K562 (cell line): ENCODE measurements at regions of chr10 and their contacts with region 1.

Region 1: GRCh38 chr10:132048294-132048667 is 17.5 kb upstream of the JAKMIP3 start:
- DNase-seq: no peak
- ATAC-seq: no peak
- H3K4me3 ChIP-seq: no peak overlapping the region
- H3K27ac ChIP-seq: no peak overlapping the region
- H3K4me1 ChIP-seq: no peaks in the 10 kb centered on the region
- H3K27me3 ChIP-seq: peaks cover 4 to 38% of the 10 kb centered on the region in 2 experiments; a peak in 4 of 5 replicates
- CTCF ChIP-seq: no peak
- EP300 ChIP-seq: no peak
- POLR2A ChIP-seq: no peak
- RAD21 ChIP-seq: no peak

Region 2: DNA sequence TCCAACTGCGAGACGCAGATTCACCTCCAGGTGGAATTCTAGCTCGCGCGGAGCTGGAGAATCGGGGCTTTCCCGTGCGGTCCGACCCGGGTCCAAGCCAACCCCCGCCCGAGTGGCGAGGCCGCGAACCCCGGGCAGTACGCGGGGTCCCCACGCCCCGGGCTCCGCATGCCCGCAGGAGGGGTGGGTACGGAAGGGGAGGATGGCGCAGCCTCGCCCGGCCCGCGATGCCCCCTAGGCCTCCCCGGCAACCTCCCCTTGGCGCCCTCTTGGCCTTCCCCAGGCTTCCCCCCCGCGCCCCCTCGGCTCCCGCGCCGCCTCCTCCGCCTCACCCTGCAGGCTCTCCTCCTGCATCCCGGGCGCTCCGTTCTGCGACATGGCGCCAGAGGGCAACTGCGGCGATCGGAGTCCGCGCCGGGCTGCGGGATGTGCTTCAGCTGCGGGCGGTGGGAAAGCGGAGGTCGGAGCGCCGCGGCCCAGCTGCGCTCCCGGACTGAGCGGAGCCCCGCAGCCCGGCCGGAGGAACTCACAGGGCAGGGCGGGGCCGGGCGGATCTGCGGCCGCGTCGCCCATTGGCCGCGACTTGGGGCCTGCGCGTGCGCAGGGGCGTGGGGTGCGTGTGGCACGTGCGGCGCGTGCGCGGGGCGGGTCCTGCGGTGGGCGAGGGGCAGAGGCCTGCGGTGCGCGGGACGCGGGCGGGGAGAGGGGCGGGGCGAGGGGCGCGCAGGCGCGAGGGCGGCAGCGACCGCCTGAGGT is 66.7 kb before region 1 on chr10 and contains the start of gene BNIP3:
- CTCF ChIA-PET with region 1: no interaction called
- POLR2A ChIA-PET with region 1: no interaction called
- in situ Hi-C with region 1: no loop called
- intact Hi-C with region 1: no loop called
- DNase-seq: peak; percentile 94 to 97 (median 97)
- ATAC-seq: peak; percentile 95
- H3K4me3 ChIP-seq: peak within 1 kb of the TSS; percentile 68
- H3K27ac ChIP-seq: peak within 1 kb of the TSS; percentile 79
- H3K4me1 ChIP-seq: peaks cover 30 to 35% of the 10 kb centered on the region in 2 experiments; a peak in 4 of 5 replicates
- H3K27me3 ChIP-seq: no peaks in the 10 kb centered on the region
- CTCF ChIP-seq: 0 out of 6 replicates have a peak, but pooled peaks of 1 of the 3 experiments have one; percentile 4
- EP300 ChIP-seq: no peak
- POLR2A ChIP-seq: peak; percentile 69
- RAD21 ChIP-seq: no peak
- polyA plus RNA-seq, gene BNIP3: 9.2 to 10.7 TPM

Region 3: GRCh38 chr10:132065491-132066105 is 17.3 kb after region 1 on chr10 and contains the start of gene JAKMIP3:
- CTCF ChIA-PET with region 1: no interaction called
- POLR2A ChIA-PET with region 1: no interaction called
- in situ Hi-C with region 1: no loop called
- intact Hi-C with region 1: no loop called
- DNase-seq: peak in 1 of 4 experiments; percentile 7
- ATAC-seq: peak; percentile 69
- H3K4me3 ChIP-seq: no peak within 1 kb of the TSS
- H3K27ac ChIP-seq: no peak within 1 kb of the TSS
- H3K4me1 ChIP-seq: peaks cover 0 to 13% of the 10 kb centered on the region in 2 experiments; a peak in 3 of 5 replicates
- H3K27me3 ChIP-seq: peaks cover 5 to 92% of the 10 kb centered on the region in 2 experiments
- CTCF ChIP-seq: no peak
- EP300 ChIP-seq: no peak
- POLR2A ChIP-seq: no peak
- RAD21 ChIP-seq: no peak
- polyA plus RNA-seq, gene JAKMIP3: not detected

Region 4: DNA sequence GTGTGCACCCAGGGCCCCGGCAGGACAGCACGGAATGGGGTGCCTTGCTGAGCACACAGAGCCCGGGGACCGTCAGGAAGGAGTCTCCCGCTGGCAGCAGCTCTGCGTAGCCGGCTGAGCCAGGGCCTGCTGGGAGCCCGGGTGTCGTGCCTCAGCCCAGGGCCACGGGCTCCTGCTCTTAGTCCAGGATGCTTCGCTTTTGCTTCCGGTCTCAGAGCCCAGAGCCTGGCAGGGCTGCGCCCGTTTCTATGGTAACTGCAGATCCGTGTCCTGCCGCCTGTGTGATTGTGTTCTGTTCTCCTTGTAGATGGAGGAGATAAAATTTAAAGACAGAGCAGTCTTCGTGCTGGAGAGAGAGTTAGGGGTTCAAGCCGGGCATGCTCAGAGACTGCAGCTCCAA is 84.7 kb after region 1 on chr10:
- CTCF ChIA-PET with region 1: no interaction called
- POLR2A ChIA-PET with region 1: no interaction called
- in situ Hi-C with region 1: no loop called
- intact Hi-C with region 1: loop called (anchors 10 kb)
- DNase-seq: no peak
- ATAC-seq: no peak
- H3K4me3 ChIP-seq: no peak overlapping the region
- H3K27ac ChIP-seq: no peak overlapping the region
- H3K4me1 ChIP-seq: no peaks in the 10 kb centered on the region
- H3K27me3 ChIP-seq: peaks cover 7 to 70% of the 10 kb centered on the region in 2 experiments; a peak in 4 of 5 replicates
- CTCF ChIP-seq: no peak
- EP300 ChIP-seq: no peak
- POLR2A ChIP-seq: no peak
- RAD21 ChIP-seq: no peak

Region 5: DNA sequence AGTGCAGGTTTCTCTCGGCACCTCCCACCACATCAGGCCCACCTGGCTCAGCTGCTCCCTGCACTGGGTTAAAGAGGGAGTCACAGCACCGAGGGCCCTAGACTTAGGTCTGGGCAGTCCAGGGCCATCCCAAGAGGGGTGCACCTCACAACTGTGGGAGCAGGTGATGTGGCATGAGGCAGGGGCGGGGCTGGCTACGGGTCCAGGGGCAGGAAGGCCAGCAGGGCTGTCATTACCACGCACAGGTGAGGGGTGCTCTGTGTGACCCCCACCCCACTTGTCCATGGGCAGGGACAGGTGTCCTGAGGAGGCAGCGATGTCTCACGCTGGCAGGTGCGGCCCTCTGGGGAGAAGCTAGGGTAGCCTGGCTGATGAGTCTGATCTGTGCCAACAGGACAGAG is 98.0 kb after region 1 on chr10:
- CTCF ChIA-PET with region 1: no interaction called
- POLR2A ChIA-PET with region 1: no interaction called
- in situ Hi-C with region 1: no loop called
- intact Hi-C with region 1: no loop called
- DNase-seq: no peak
- ATAC-seq: no peak
- H3K4me3 ChIP-seq: no peak overlapping the region
- H3K27ac ChIP-seq: no peak overlapping the region
- H3K4me1 ChIP-seq: peaks cover 0 to 5% of the 10 kb centered on the region in 2 experiments; a peak in 2 of 5 replicates
- H3K27me3 ChIP-seq: peaks cover 0 to 40% of the 10 kb centered on the region in 2 experiments; a peak in 3 of 5 replicates
- CTCF ChIP-seq: no peak
- EP300 ChIP-seq: no peak
- POLR2A ChIP-seq: no peak
- RAD21 ChIP-seq: no peak